ENCODE measurements at regions of chr18 and their contacts with region 1.

Region 1: DNA sequence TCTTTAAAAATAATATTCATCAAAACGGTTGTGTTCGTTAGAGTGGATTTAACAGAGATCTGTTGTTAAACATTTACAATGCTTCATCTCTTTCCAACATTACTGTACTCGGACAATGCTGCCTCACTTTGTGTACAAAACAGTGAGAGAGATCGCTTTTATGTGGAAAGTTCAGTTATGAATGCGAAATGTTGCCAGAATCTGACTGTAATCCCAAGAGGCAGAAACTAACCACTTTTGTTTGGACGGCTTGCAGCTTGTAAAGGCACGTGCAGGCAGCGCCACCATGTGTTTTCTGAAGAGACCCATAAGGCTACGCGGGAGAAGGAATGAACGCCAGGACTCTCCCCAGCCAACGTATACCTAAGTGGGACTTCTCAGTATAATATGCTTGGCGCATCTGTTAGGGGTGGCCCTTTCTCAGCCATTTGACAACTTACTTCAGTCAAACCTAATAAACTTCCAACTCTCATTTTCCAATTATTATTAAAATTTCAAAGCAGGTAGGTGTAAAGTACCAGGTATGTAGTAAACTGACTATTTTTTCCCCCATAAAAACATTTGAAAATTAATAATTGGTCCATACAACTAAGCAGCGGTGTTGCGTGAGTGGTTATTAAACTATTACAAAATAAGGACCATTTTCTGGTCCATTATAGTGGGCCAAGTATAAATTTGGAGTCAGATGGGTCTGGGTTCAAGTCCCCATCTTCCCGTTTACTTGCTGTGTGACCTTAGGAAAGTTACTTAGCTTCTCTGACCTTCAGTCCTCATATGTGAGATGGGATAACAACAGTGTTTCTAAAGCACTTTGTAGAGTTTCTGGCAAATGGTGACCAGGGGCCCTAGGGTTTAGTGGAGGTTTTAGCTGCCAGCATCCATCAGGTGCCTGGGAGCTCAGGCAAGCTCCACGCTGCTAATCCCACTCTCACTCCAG is 5.6 kb upstream of the NAPG start:
- DNase-seq: peak; percentile 75 to 87 (median 80)
- ATAC-seq: peak; percentile 88 to 93 (median 91)
- H3K4me3 ChIP-seq: no peak overlapping the region
- H3K27ac ChIP-seq: peak overlapping the region in 1 of 4 donors; percentile 6
- H3K4me1 ChIP-seq: peaks cover 5 to 20% (median 8%) of the 10 kb centered on the region in 3 donors
- H3K27me3 ChIP-seq: no peaks in the 10 kb centered on the region
- CTCF ChIP-seq: peak in 3 of 4 donors; percentile 40 to 80 (median 63)

Region 2: GRCh38 chr18:9965711-9966624 is 554.3 kb before region 1 on chr18:
- intact Hi-C with region 1: loop called (anchors 5 to 10 kb)
- DNase-seq: no peak
- ATAC-seq: peak in 1 of 4 donors; percentile 46
- H3K4me3 ChIP-seq: no peak overlapping the region
- H3K27ac ChIP-seq: no peak overlapping the region
- H3K4me1 ChIP-seq: peaks cover 0 to 6% (median 0%) of the 10 kb centered on the region in 3 donors
- H3K27me3 ChIP-seq: no peaks in the 10 kb centered on the region
- CTCF ChIP-seq: no peak

Region 3: GRCh38 chr18:9971313-9971920 is 548.9 kb before region 1 on chr18:
- intact Hi-C with region 1: loop called (anchors 5 to 10 kb)
- DNase-seq: peak in 5 of 6 donors; percentile 53 to 85 (median 53)
- ATAC-seq: peak; percentile 78 to 98 (median 92)
- H3K4me3 ChIP-seq: no peak overlapping the region
- H3K27ac ChIP-seq: no peak overlapping the region
- H3K4me1 ChIP-seq: no peaks in the 10 kb centered on the region
- H3K27me3 ChIP-seq: no peaks in the 10 kb centered on the region
- CTCF ChIP-seq: peak; percentile 49 to 68 (median 54)

Region 4: DNA sequence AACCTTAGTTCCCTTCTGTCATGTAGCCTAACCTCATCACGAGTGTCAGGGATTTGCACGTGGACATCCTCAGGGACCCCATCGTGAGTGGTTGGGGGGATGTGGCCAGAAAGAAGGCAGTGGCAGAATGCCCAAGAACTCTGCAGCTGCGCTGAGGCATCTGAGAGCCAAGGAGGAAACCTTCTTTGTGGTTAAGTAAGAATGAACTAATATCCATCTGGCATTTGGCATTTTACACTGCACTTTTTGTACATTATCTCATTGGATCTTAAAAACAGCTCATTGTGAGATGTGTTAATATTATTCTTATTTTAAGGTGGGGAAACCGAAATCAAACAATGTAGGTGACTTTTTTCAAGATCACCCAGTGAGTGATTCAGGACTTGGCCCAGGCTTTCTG is 98.4 kb before region 1 on chr18:
- intact Hi-C with region 1: no loop called
- DNase-seq: no peak
- ATAC-seq: no peak
- H3K4me3 ChIP-seq: no peak overlapping the region
- H3K27ac ChIP-seq: no peak overlapping the region
- H3K4me1 ChIP-seq: no peaks in the 10 kb centered on the region
- H3K27me3 ChIP-seq: no peaks in the 10 kb centered on the region
- CTCF ChIP-seq: no peak

Region 5: GRCh38 chr18:10822456-10822855 is 302.2 kb after region 1 on chr18:
- intact Hi-C with region 1: no loop called
- DNase-seq: no peak
- ATAC-seq: no peak
- H3K4me3 ChIP-seq: no peak overlapping the region
- H3K27ac ChIP-seq: no peak overlapping the region
- H3K4me1 ChIP-seq: no peaks in the 10 kb centered on the region
- H3K27me3 ChIP-seq: no peaks in the 10 kb centered on the region
- CTCF ChIP-seq: no peak